CD4-positive, alpha-beta memory T cell (primary cell): ENCODE measurements at regions of chr7 and their contacts with region 1.

Region 1: DNA sequence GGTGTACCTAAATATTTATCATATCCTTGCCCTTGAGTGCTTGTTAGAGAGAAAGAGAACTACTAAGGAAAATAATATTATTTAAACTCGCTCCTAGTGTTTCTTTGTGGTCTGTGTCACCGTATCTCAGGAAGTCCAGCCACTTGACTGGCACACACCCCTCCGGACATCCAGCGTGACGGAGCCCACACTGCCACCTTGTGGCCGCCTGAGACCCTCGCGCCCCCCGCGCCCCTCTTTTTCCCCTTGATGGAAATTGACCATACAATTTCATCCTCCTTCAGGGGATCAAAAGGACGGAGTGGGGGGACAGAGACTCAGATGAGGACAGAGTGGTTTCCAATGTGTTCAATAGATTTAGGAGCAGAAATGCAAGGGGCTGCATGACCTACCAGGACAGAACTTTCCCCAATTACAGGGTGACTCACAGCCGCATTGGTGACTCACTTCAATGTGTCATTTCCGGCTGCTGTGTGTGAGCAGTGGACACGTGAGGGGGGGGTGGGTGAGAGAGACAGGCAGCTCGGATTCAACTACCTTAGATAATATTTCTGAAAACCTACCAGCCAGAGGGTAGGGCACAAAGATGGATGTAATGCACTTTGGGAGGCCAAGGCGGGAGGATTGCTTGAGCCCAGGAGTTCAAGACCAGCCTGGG is 11.4 kb downstream of the SERPINE1 start:
- DNase-seq: peak; percentile 43 to 95 (median 52)
- H3K4me3 ChIP-seq: no peak overlapping the region
- H3K4me3 Mint-ChIP-seq: peak overlapping the region in 4 of 8 donors; percentile 24 to 76 (median 52)
- H3K27ac ChIP-seq: no peak overlapping the region
- H3K27ac Mint-ChIP-seq: peak overlapping the region in 6 of 7 donors; percentile 51 to 81 (median 80)
- H3K4me1 ChIP-seq: peaks cover 8% of the 10 kb centered on the region
- H3K4me1 Mint-ChIP-seq: peaks cover 3 to 22% (median 8%) of the 10 kb centered on the region in 4 donors
- H3K27me3 ChIP-seq: no peaks in the 10 kb centered on the region
- H3K27me3 Mint-ChIP-seq: peaks cover 13 to 14% of the 10 kb centered on the region in 2 donors

Region 2: DNA sequence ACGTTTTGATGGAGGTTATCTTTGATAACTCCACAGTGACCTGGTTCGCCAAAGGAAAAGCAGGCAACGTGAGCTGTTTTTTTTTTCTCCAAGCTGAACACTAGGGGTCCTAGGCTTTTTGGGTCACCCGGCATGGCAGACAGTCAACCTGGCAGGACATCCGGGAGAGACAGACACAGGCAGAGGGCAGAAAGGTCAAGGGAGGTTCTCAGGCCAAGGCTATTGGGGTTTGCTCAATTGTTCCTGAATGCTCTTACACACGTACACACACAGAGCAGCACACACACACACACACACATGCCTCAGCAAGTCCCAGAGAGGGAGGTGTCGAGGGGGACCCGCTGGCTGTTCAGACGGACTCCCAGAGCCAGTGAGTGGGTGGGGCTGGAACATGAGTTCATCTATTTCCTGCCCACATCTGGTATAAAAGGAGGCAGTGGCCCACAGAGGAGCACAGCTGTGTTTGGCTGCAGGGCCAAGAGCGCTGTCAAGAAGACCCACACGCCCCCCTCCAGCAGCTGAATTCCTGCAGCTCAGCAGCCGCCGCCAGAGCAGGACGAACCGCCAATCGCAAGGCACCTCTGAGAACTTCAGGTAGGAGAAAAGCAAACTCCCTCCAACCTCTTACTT is 11.6 kb before region 1 on chr7 and contains the start of gene SERPINE1:
- CTCF ChIA-PET with region 1: interaction called, 69 read pairs
- POLR2A ChIA-PET with region 1: no interaction called
- intact Hi-C with region 1: no loop called
- DNase-seq: peak; percentile 12 to 76 (median 39)
- H3K4me3 ChIP-seq: no peak within 1 kb of the TSS
- H3K4me3 Mint-ChIP-seq: peak within 1 kb of the TSS in 7 of 8 donors; percentile 55 to 83 (median 72)
- H3K27ac ChIP-seq: no peak within 1 kb of the TSS
- H3K27ac Mint-ChIP-seq: peak within 1 kb of the TSS in 5 of 7 donors; percentile 38 to 87 (median 75)
- H3K4me1 ChIP-seq: peaks cover 22% of the 10 kb centered on the region
- H3K4me1 Mint-ChIP-seq: peaks cover 17 to 44% (median 29%) of the 10 kb centered on the region in 4 donors
- H3K27me3 ChIP-seq: peaks cover 4% of the 10 kb centered on the region
- H3K27me3 Mint-ChIP-seq: peaks cover 39 to 47% of the 10 kb centered on the region in 2 donors
- total RNA-seq, gene SERPINE1: 0.11 to 0.20 TPM

Region 3: GRCh38 chr7:101165075-101165957 is 27.0 kb after region 1 on chr7 and contains the start of gene VGF:
- CTCF ChIA-PET with region 1: interaction called, 44 read pairs
- POLR2A ChIA-PET with region 1: interaction called, 7 read pairs
- intact Hi-C with region 1: no loop called
- DNase-seq: peak; percentile 89 to 92 (median 90)
- H3K4me3 ChIP-seq: peak within 1 kb of the TSS in 1 of 2 donors; percentile 23
- H3K4me3 Mint-ChIP-seq: peak within 1 kb of the TSS; percentile 63 to 87 (median 78)
- H3K27ac ChIP-seq: no peak within 1 kb of the TSS
- H3K27ac Mint-ChIP-seq: peak within 1 kb of the TSS; percentile 74 to 93 (median 88)
- H3K4me1 ChIP-seq: peaks cover 53% of the 10 kb centered on the region
- H3K4me1 Mint-ChIP-seq: peaks cover 20 to 48% (median 35%) of the 10 kb centered on the region in 4 donors
- H3K27me3 ChIP-seq: peaks cover 62% of the 10 kb centered on the region
- H3K27me3 Mint-ChIP-seq: peaks cover 46 to 47% of the 10 kb centered on the region in 2 donors
- total RNA-seq, gene VGF: not detected

Region 4: DNA sequence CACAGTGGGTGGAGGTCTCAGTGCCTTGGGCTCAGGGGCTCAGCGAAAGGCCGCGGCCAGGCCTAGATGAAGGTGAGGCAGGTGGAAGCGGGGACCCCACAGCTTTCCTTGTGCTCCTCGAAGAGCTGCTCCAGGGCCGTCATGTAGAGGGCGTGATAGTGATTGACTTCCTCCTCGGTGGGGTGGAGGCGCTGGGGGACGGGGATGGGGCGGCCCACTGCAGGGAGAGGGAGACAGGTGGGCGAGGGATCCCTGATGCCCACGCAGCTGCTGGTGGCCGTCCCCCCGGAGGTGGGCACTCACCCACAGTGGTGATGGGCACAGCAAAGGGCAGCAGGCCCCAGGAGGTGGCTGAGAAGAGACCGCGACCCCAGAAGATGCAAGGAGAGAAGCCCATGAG is 57.5 kb after region 1 on chr7:
- CTCF ChIA-PET with region 1: interaction called, 177 read pairs
- POLR2A ChIA-PET with region 1: no interaction called
- intact Hi-C with region 1: no loop called
- DNase-seq: no peak
- H3K4me3 ChIP-seq: no peak overlapping the region
- H3K4me3 Mint-ChIP-seq: no peak overlapping the region
- H3K27ac ChIP-seq: no peak overlapping the region
- H3K27ac Mint-ChIP-seq: no peak overlapping the region
- H3K4me1 ChIP-seq: peaks cover 2% of the 10 kb centered on the region
- H3K4me1 Mint-ChIP-seq: peaks cover under 1 to 8% (median 4%) of the 10 kb centered on the region in 4 donors
- H3K27me3 ChIP-seq: no peaks in the 10 kb centered on the region
- H3K27me3 Mint-ChIP-seq: peaks cover 7 to 14% of the 10 kb centered on the region in 2 donors

Region 5: GRCh38 chr7:101244375-101245146 is 106.2 kb after region 1 on chr7 and contains the start of gene FIS1:
- CTCF ChIA-PET with region 1: interaction called, 62 read pairs
- POLR2A ChIA-PET with region 1: interaction called, 15 read pairs
- intact Hi-C with region 1: no loop called
- DNase-seq: peak; percentile 91 to 96 (median 93)
- H3K4me3 ChIP-seq: peak within 1 kb of the TSS; percentile 95 to 100
- H3K4me3 Mint-ChIP-seq: peak within 1 kb of the TSS; percentile 93 to 99 (median 97)
- H3K27ac ChIP-seq: peak within 1 kb of the TSS; percentile 85
- H3K27ac Mint-ChIP-seq: peak within 1 kb of the TSS; percentile 93 to 99 (median 97)
- H3K4me1 ChIP-seq: peaks cover 24% of the 10 kb centered on the region
- H3K4me1 Mint-ChIP-seq: peaks cover 14 to 50% (median 24%) of the 10 kb centered on the region in 4 donors
- H3K27me3 ChIP-seq: no peaks in the 10 kb centered on the region
- H3K27me3 Mint-ChIP-seq: no peaks in the 10 kb centered on the region
- total RNA-seq, gene FIS1: 100 to 104 TPM

Region 6: DNA sequence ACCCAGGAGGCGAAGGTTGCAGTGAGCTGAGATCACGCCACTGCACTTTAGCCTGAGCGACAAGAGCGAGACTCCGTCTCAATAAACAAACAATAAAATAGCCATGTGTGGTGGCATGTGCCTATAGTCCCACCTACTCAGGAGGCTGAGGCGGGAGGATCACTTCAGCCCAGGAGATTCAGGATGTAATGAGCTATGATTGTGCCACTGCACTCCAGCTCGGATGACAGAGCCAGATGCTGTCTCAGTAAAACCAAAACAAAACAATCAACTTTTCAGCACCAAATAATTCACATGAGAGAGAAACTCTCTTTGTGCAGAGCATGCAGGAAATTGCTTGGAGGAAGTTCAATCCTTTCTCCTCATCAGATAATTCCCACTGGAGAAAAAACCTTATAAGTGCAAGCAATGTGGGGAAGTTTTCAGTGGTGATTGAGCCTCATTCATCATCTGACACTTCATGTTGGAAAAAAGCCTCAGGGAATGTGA is 119.9 kb after region 1 on chr7:
- CTCF ChIA-PET with region 1: no interaction called
- POLR2A ChIA-PET with region 1: no interaction called
- intact Hi-C with region 1: no loop called
- DNase-seq: no peak
- H3K4me3 ChIP-seq: no peak overlapping the region
- H3K4me3 Mint-ChIP-seq: no peak overlapping the region
- H3K27ac ChIP-seq: no peak overlapping the region
- H3K27ac Mint-ChIP-seq: no peak overlapping the region
- H3K4me1 ChIP-seq: no peaks in the 10 kb centered on the region
- H3K4me1 Mint-ChIP-seq: no peaks in the 10 kb centered on the region
- H3K27me3 ChIP-seq: no peaks in the 10 kb centered on the region
- H3K27me3 Mint-ChIP-seq: peaks cover 7 to 8% of the 10 kb centered on the region in 2 donors

Region 7: GRCh38 chr7:101294039-101294831 is 155.9 kb after region 1 on chr7:
- CTCF ChIA-PET with region 1: interaction called, 26 read pairs
- POLR2A ChIA-PET with region 1: no interaction called
- intact Hi-C with region 1: no loop called
- DNase-seq: no peak
- H3K4me3 ChIP-seq: no peak overlapping the region
- H3K4me3 Mint-ChIP-seq: no peak overlapping the region
- H3K27ac ChIP-seq: no peak overlapping the region
- H3K27ac Mint-ChIP-seq: peak overlapping the region in 1 of 7 donors; percentile 19
- H3K4me1 ChIP-seq: peaks cover 5% of the 10 kb centered on the region
- H3K4me1 Mint-ChIP-seq: peaks cover 3 to 14% (median 9%) of the 10 kb centered on the region in 4 donors
- H3K27me3 ChIP-seq: peaks cover 7% of the 10 kb centered on the region
- H3K27me3 Mint-ChIP-seq: peaks cover 30 to 31% of the 10 kb centered on the region in 2 donors